Activated CD4-positive, alpha-beta memory T cell treated with anti-CD3 and anti-CD28 coated beads, Interleukin-2, amount 10 ng/mL, durations not matched to agents 7 days and 5 days (primary cell): ENCODE measurements at regions of chr20 and their contacts with region 1.

Region 1: GRCh38 chr20:2387180-2387577 is 6.5 kb downstream of the TGM6 start:
- DNase-seq: peak; percentile 76
- H3K4me3 Mint-ChIP-seq: peak overlapping the region; percentile 48
- H3K27ac Mint-ChIP-seq: no peak overlapping the region
- H3K4me1 Mint-ChIP-seq: peaks cover 8% of the 10 kb centered on the region
- H3K27me3 Mint-ChIP-seq: peaks cover 4% of the 10 kb centered on the region

Region 2: DNA sequence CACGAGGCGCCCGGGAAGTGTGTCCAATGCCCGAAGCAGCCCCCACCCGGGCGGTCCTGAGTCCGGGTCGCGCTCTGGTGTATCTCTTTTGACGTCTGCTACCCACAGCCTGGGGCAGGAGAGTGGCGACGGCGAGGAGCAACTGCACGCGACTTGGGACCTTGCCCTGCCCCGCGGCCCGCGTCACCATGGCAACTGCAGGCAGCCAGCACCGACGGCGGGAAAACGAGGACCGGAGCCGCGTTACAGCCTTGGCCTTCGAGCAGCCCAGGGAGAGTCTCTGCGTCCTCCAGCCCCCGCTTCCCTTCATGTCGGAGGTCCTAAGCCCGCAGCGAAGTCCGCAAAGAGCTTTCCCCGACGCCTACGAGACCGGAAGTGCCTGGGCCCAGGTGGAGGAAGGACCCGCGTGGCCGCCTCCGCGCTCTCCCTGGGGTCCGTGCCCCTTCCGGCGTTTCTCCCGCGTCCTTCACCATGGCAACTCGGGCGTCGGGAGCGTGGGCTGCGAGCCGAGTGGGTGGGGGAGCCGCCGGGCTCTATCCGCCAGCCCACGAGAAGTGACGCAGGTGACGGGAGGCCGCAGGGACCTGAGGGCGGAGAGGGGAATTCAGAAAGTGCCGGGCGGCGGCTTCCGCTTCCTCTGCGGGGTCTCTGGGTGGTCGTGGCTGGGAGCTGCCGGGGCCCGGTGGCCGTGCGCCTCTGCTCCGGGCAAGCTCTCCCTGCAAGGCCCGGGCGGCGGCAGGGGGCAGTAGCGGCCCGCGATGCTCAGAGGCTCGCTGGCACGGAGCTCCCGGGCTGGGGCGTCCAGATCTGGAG is 180.0 kb before region 1 on chr20:
- CTCF ChIA-PET with region 1: interaction called, 14 read pairs
- POLR2A ChIA-PET with region 1: no interaction called
- DNase-seq: peak; percentile 66
- H3K4me3 Mint-ChIP-seq: peak overlapping the region; percentile 63
- H3K27ac Mint-ChIP-seq: no peak overlapping the region
- H3K4me1 Mint-ChIP-seq: peaks cover 1% of the 10 kb centered on the region
- H3K27me3 Mint-ChIP-seq: peaks cover 27% of the 10 kb centered on the region

Region 3: DNA sequence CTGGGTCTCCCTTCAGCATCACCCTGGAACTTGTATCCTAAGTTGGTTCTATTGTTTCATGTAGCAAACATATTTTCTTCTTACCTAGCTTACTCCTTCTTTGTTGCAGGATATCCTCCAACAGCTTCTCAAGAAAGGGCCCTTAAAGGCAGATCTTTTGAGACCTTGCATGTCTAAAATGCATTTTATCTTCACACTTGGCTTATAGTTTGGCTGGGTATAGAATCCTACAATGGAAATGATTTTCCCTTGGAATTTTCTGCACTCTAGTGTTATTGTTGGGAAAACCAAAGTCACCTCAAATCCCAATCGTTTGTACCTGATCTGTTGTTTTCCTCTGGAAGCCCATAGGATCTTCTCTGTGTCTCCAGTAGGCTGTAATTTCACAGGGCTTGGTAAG is 18.6 kb before region 1 on chr20:
- CTCF ChIA-PET with region 1: interaction called, 16 read pairs
- POLR2A ChIA-PET with region 1: no interaction called
- DNase-seq: no peak
- H3K4me3 Mint-ChIP-seq: no peak overlapping the region
- H3K27ac Mint-ChIP-seq: no peak overlapping the region
- H3K4me1 Mint-ChIP-seq: no peaks in the 10 kb centered on the region
- H3K27me3 Mint-ChIP-seq: peaks cover 26% of the 10 kb centered on the region

Region 4: GRCh38 chr20:2374346-2375125 is 12.6 kb before region 1 on chr20:
- CTCF ChIA-PET with region 1: interaction called, 19 read pairs
- POLR2A ChIA-PET with region 1: interaction called, 3 read pairs
- DNase-seq: no peak
- H3K4me3 Mint-ChIP-seq: no peak overlapping the region
- H3K27ac Mint-ChIP-seq: no peak overlapping the region
- H3K4me1 Mint-ChIP-seq: peaks cover 9% of the 10 kb centered on the region
- H3K27me3 Mint-ChIP-seq: peaks cover 28% of the 10 kb centered on the region

Region 5: DNA sequence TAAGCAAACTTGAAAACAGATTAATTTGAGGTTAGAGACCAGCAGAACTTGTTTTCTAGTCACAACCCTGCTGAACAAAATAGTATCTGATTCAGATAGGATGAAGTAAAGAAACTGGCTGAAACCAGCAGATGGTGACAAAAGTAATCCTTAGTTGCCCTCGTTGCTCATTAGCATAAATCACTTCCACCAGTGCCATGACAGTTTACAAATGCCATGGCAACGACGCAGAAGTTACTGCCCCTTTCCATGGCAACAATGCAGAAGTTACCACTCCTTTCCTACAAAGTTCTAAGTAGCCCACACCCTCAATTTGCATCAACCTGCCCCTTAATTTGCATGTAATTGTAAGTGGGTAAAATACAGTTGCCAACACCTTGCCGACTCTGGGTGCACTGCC is 59.7 kb after region 1 on chr20:
- CTCF ChIA-PET with region 1: interaction called, 41 read pairs
- POLR2A ChIA-PET with region 1: interaction called, 4 read pairs
- DNase-seq: no peak
- H3K4me3 Mint-ChIP-seq: no peak overlapping the region
- H3K27ac Mint-ChIP-seq: no peak overlapping the region
- H3K4me1 Mint-ChIP-seq: peaks cover 17% of the 10 kb centered on the region
- H3K27me3 Mint-ChIP-seq: peaks cover 8% of the 10 kb centered on the region

Region 6: GRCh38 chr20:2451939-2452732 is 65.0 kb after region 1 on chr20:
- CTCF ChIA-PET with region 1: interaction called, 41 read pairs
- POLR2A ChIA-PET with region 1: interaction called, 4 read pairs
- DNase-seq: peak; percentile 72
- H3K4me3 Mint-ChIP-seq: no peak overlapping the region
- H3K27ac Mint-ChIP-seq: no peak overlapping the region
- H3K4me1 Mint-ChIP-seq: peaks cover 19% of the 10 kb centered on the region
- H3K27me3 Mint-ChIP-seq: peaks cover 5% of the 10 kb centered on the region